IMR-90 (cell line): ENCODE measurements at regions of chr7 and their contacts with region 1.

Region 1: DNA sequence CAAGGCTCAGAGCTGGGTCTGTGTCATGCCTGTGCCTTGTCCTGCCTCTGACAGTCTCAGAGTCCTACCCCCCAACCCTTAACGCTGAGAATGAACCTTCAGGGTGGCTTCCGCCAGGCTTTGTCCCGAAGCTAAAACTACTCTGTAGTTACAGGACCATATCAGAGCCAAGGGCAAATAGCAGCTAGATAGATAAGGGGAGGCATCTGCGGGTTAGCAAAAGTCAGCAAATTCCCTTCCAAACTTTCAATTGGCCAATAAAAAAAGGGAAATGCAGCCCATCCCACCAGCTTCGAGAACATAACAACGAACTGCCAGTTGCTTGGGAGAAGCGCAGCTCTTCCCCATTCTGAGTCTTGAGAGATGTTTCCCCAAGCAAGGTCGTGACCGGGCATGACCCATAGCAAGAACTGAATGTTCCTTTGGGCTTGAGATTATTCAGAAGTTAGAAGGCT is 17.7 kb downstream of the CCL24 start:
- DNase-seq: no peak
- ATAC-seq: no peak
- H3K4me3 ChIP-seq: no peak overlapping the region
- H3K27ac ChIP-seq: no peak overlapping the region
- H3K4me1 ChIP-seq: peaks cover 4% of the 10 kb centered on the region
- H3K27me3 ChIP-seq: peaks cover 27% of the 10 kb centered on the region
- CTCF ChIP-seq: no peak
- POLR2A ChIP-seq: no peak
- RAD21 ChIP-seq: no peak

Region 2: DNA sequence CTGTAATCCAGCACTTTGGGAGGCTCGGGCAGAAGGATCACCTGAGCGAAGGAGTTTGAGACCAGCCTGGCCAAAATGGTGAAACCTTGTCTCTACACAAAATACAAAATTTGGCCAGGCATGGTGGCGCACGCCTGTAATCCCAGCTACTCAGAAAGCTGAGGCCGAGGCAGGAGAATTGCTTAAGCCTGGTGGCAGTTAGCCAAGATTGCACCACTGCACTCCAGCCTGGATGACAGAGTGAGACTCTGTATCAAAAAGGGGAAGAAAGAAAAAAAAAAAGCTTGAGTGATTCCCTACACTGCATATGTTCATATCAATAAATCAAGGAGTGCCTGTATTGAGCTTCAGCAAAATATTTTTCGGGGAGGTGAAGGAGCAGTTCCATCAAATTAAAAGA is 360.1 kb after region 1 on chr7:
- CTCF ChIA-PET with region 1: interaction called, 11 read pairs
- POLR2A ChIA-PET with region 1: no interaction called
- dilution Hi-C with region 1: no loop called
- in situ Hi-C with region 1: no loop called
- intact Hi-C with region 1: no loop called
- DNase-seq: peak; percentile 56
- ATAC-seq: peak; percentile 49; the same call in 1 of the 2 replicates
- H3K4me3 ChIP-seq: no peak overlapping the region
- H3K27ac ChIP-seq: no peak overlapping the region
- H3K4me1 ChIP-seq: no peaks in the 10 kb centered on the region
- H3K27me3 ChIP-seq: peaks cover 1% of the 10 kb centered on the region
- CTCF ChIP-seq: no peak
- POLR2A ChIP-seq: no peak
- RAD21 ChIP-seq: no peak